ENCODE measurements at regions of chr13 and their contacts with region 1.

Region 1: DNA sequence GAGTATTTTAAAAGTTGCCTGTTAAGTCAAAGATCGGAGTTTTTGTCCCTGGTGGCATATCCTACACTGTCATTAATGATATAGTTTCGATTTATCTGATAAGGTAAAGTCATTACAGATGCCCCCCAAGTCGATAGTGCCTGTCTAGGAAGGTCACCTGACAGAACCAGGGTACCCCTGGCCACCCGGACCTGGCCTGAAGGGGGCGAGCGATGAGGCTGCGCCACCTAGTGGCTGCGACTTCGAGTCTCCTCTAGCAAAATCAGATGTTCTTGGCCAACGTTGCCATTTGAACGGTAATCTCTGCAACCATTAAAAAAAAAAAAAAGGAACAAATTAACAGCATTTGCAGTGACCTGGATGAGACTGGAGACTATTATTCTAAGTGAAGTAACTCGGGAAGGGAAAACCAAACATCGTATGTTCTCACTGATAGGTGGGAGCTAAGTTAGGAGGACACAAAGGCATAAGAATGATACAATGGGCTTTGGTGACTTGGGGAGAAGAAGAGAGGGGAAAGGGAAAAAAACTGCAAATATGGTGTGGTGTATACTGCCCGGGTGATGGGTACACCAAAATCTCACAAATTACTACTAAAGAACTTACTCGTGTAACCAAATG is 565.1 kb downstream of the LIG4 start:
- DNase-seq: peak; percentile 57
- H3K4me3 Mint-ChIP-seq: peak overlapping the region; percentile 19
- H3K27ac Mint-ChIP-seq: no peak overlapping the region
- H3K4me1 Mint-ChIP-seq: no peaks in the 10 kb centered on the region
- H3K27me3 Mint-ChIP-seq: peaks cover 11% of the 10 kb centered on the region
- CTCF ChIP-seq: peak; percentile 63

Region 2: GRCh38 chr13:107203146-107203847 is 446.9 kb before region 1 on chr13:
- CTCF ChIA-PET with region 1: interaction called, 20 read pairs
- POLR2A ChIA-PET with region 1: no interaction called
- intact Hi-C with region 1: no loop called
- DNase-seq: peak; percentile 30
- H3K4me3 Mint-ChIP-seq: no peak overlapping the region
- H3K27ac Mint-ChIP-seq: no peak overlapping the region
- H3K4me1 Mint-ChIP-seq: peaks cover 15% of the 10 kb centered on the region
- H3K27me3 Mint-ChIP-seq: peaks cover 21% of the 10 kb centered on the region
- CTCF ChIP-seq: peak; percentile 33

Region 3: GRCh38 chr13:107211073-107211472 is 439.1 kb before region 1 on chr13:
- CTCF ChIA-PET with region 1: interaction called, 70 read pairs
- POLR2A ChIA-PET with region 1: no interaction called
- intact Hi-C with region 1: loop called (anchors 1 kb)
- DNase-seq: peak; percentile 89
- H3K4me3 Mint-ChIP-seq: no peak overlapping the region
- H3K27ac Mint-ChIP-seq: no peak overlapping the region
- H3K4me1 Mint-ChIP-seq: peaks cover 5% of the 10 kb centered on the region
- H3K27me3 Mint-ChIP-seq: peaks cover 20% of the 10 kb centered on the region
- CTCF ChIP-seq: peak; percentile 87

Region 4: DNA sequence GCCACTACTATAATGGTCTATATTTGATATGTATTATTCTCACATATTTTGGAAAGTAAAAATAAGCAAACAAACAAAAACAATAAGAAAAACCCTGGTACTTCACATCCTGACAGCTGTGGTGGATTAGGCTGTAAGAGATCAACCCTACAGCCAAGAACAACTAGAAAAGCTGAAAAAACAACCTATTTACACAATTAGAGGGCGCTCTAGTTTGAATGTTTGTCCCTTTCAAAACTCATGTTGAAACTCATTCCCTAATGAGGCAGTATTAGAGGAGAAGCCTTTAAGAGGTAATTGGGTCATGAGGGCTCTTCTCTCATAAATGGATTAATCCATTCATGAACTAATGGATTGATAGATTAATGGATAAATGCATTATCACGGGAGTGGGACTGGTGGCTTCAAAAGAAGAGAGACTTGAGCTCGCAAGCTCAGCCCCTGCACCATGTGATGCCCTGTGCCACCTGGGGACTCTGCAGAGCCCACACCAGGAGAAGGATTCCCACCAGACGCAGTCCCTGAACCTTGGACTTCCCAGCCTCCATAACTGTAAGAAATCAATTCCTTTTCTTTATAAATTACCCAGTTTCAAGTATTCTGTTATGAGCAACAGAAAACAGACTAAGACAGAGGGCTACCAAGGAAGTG is 348.3 kb before region 1 on chr13:
- CTCF ChIA-PET with region 1: interaction called, 10 read pairs
- POLR2A ChIA-PET with region 1: no interaction called
- intact Hi-C with region 1: no loop called
- DNase-seq: peak; percentile 27
- H3K4me3 Mint-ChIP-seq: no peak overlapping the region
- H3K27ac Mint-ChIP-seq: no peak overlapping the region
- H3K4me1 Mint-ChIP-seq: peaks cover 9% of the 10 kb centered on the region
- H3K27me3 Mint-ChIP-seq: no peaks in the 10 kb centered on the region
- CTCF ChIP-seq: no peak

Region 5: GRCh38 chr13:107373551-107373950 is 276.6 kb before region 1 on chr13:
- CTCF ChIA-PET with region 1: interaction called, 26 read pairs
- POLR2A ChIA-PET with region 1: no interaction called
- intact Hi-C with region 1: loop called (anchors 1 kb)
- DNase-seq: peak; percentile 78
- H3K4me3 Mint-ChIP-seq: no peak overlapping the region
- H3K27ac Mint-ChIP-seq: no peak overlapping the region
- H3K4me1 Mint-ChIP-seq: no peaks in the 10 kb centered on the region
- H3K27me3 Mint-ChIP-seq: no peaks in the 10 kb centered on the region
- CTCF ChIP-seq: peak; percentile 33

Region 6: GRCh38 chr13:107387525-107387924 is 262.7 kb before region 1 on chr13:
- CTCF ChIA-PET with region 1: interaction called, 16 read pairs
- POLR2A ChIA-PET with region 1: no interaction called
- intact Hi-C with region 1: no loop called
- DNase-seq: no peak
- H3K4me3 Mint-ChIP-seq: no peak overlapping the region
- H3K27ac Mint-ChIP-seq: no peak overlapping the region
- H3K4me1 Mint-ChIP-seq: no peaks in the 10 kb centered on the region
- H3K27me3 Mint-ChIP-seq: no peaks in the 10 kb centered on the region
- CTCF ChIP-seq: no peak

Region 7: GRCh38 chr13:107669391-107669993 is 19.3 kb after region 1 on chr13:
- CTCF ChIA-PET with region 1: interaction called, 20 read pairs
- POLR2A ChIA-PET with region 1: interaction called, 3 read pairs
- intact Hi-C with region 1: no loop called
- DNase-seq: no peak
- H3K4me3 Mint-ChIP-seq: no peak overlapping the region
- H3K27ac Mint-ChIP-seq: no peak overlapping the region
- H3K4me1 Mint-ChIP-seq: no peaks in the 10 kb centered on the region
- H3K27me3 Mint-ChIP-seq: no peaks in the 10 kb centered on the region
- CTCF ChIP-seq: no peak

Measured in MCF 10A (cell line).